Activated naive CD4-positive, alpha-beta T cell treated with anti-CD3 and anti-CD28 coated beads for 36 hours (primary cell): ENCODE measurements at regions of chr5 and their contacts with region 1.

Region 1: DNA sequence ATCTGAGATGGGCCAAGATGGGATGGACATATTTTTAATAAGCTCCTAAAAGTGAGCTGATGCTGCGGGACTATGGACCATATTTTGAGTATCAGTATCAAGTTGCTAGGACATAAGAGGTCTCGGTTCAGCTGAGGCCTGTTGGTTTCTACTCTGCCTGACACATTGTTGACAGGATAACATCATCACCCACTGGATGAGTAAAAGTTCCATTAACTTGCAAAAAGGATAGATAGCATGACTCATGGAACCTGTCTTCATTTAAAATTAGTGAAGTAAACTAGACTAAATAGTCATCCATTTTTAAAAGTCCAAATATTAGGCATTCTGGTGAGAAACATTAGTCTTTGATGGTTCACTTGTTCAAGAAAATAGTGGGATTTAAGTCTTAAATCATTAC is 33.3 kb downstream of the PARP8 start:
- DNase-seq: peak; percentile 37
- H3K4me3 Mint-ChIP-seq: no peak overlapping the region
- H3K27ac Mint-ChIP-seq: peak overlapping the region; percentile 71
- H3K4me1 Mint-ChIP-seq: peaks cover 72% of the 10 kb centered on the region
- H3K27me3 Mint-ChIP-seq: no peaks in the 10 kb centered on the region

Region 2: DNA sequence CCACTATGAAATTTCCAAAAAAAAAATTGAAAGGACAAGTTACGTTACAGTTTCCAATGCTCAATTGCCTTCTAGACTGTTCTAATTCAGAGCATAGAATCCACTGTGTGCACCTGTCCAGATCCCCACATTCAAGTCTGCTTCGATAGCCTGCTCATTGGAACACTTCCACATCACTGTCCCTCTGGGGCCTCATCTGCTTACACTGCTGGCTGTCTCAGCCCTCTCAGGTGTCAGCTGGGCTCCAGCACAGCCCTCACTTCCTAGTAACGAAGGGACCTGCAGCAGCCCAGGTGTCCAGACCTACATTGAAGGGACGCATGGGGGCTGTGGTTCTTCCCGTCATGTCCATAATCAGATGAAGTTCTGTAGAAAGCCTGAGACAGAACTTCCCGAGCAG is 164.3 kb before region 1 on chr5:
- CTCF ChIA-PET with region 1: no interaction called
- intact Hi-C with region 1: no loop called
- DNase-seq: no peak
- H3K4me3 Mint-ChIP-seq: no peak overlapping the region
- H3K27ac Mint-ChIP-seq: no peak overlapping the region
- H3K4me1 Mint-ChIP-seq: peaks cover 4% of the 10 kb centered on the region
- H3K27me3 Mint-ChIP-seq: no peaks in the 10 kb centered on the region

Region 3: DNA sequence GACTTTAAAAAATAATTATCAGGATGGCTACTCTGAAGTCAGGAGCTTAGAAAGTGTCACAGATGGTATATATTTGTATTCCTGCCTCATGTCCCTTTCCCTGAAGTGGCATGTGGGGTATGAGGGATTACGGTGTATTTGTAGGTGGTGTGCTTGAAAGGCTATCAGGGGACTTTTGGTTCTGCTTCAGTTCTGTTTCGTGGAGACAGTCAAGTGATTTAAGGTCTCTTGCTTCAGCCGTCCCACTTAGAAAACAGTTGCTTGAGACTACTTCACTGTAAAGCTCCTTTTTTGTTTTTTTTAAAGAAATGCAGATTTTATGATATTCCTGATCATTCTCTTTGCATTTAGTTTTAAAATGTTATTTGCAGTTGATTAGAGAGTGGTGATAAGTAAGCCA is 15.0 kb before region 1 on chr5:
- CTCF ChIA-PET with region 1: no interaction called
- intact Hi-C with region 1: no loop called
- DNase-seq: no peak
- H3K4me3 Mint-ChIP-seq: no peak overlapping the region
- H3K27ac Mint-ChIP-seq: no peak overlapping the region
- H3K4me1 Mint-ChIP-seq: peaks cover 49% of the 10 kb centered on the region
- H3K27me3 Mint-ChIP-seq: no peaks in the 10 kb centered on the region

Region 4: GRCh38 chr5:50711273-50711672 is 11.5 kb after region 1 on chr5:
- CTCF ChIA-PET with region 1: interaction called, 3 read pairs
- intact Hi-C with region 1: loop called (anchors 1 kb)
- DNase-seq: peak; percentile 76
- H3K4me3 Mint-ChIP-seq: peak overlapping the region; percentile 71
- H3K27ac Mint-ChIP-seq: peak overlapping the region; percentile 88
- H3K4me1 Mint-ChIP-seq: peaks cover 79% of the 10 kb centered on the region
- H3K27me3 Mint-ChIP-seq: no peaks in the 10 kb centered on the region

Region 5: GRCh38 chr5:50724262-50724661 is 24.5 kb after region 1 on chr5:
- CTCF ChIA-PET with region 1: no interaction called
- intact Hi-C with region 1: no loop called
- DNase-seq: no peak
- H3K4me3 Mint-ChIP-seq: no peak overlapping the region
- H3K27ac Mint-ChIP-seq: no peak overlapping the region
- H3K4me1 Mint-ChIP-seq: peaks cover 69% of the 10 kb centered on the region
- H3K27me3 Mint-ChIP-seq: no peaks in the 10 kb centered on the region

Region 6: DNA sequence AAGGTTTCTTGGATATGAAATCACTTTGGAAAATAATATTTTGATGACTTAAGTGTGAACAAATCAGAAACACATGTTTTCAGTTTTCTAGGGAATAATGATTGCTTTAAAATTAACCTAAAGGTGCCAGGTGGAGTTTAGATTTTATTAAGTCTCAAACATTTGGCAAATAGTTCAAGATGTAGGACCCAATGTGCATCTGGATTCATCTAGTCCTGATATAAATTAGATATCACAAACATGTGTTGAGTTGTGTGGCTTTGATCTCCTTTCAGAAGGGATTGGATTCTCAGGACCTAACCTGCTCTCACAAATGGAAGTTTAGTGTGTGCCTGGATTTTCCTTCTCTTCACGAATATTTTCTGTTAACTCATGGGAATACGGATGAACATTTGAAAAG is 392.1 kb after region 1 on chr5:
- CTCF ChIA-PET with region 1: no interaction called
- intact Hi-C with region 1: no loop called
- DNase-seq: no peak
- H3K4me3 Mint-ChIP-seq: no peak overlapping the region
- H3K27ac Mint-ChIP-seq: no peak overlapping the region
- H3K4me1 Mint-ChIP-seq: no peaks in the 10 kb centered on the region
- H3K27me3 Mint-ChIP-seq: no peaks in the 10 kb centered on the region